ENCODE measurements at regions of chr22 and their contacts with region 1.

Region 1: DNA sequence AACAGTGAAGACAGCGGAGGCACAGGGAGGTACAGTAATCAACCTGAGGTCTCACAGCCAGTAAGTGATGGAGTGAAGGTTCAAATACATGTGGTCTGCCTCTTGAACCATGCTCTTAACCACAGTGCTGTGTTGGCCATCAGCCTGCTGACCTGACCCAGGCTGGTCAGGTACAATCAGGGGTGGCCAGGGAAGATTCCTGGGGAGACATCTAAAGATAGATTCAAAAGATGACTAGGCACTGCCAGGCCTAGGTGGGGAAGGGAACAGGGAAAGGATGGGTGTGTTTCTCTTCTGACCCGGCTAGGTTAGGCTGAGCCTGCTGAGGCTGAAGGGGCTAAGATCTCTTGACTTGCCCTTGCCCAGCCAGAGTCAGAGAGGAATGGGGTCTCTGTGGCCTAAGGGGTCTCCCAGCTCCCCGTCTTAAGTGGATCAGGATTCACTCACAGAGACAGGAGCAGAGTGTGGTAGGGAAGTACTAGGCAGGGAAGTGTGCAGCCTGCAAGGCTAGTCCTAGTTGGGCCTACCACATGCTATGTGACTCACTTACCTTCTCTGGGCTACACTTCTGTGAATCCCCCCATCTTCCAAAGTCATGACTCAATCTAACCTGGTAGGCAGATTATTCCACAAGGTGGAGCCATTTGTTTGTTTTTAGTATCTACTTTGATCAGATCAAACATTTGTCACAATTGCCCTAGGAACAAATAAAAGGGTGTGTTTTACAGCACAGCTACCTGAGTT is 10.4 kb upstream of the SREBF2 start:
- DNase-seq: peak in 14 of 35 experiments; percentile 3 to 85 (median 25)
- ATAC-seq: peak; percentile 64 to 91 (median 88)
- H3K4me3 ChIP-seq: no peak overlapping the region
- H3K4me3 Mint-ChIP-seq: no peak overlapping the region
- H3K27ac ChIP-seq: no peak overlapping the region
- H3K27ac Mint-ChIP-seq: peak overlapping the region; percentile 62 to 71
- H3K4me1 ChIP-seq: peaks cover 0 to 4% of the 10 kb centered on the region in 2 experiments
- H3K4me1 Mint-ChIP-seq: peaks cover 11 to 17% (median 14%) of the 10 kb centered on the region in 3 donors
- H3K27me3 ChIP-seq: no peaks in the 10 kb centered on the region
- H3K27me3 Mint-ChIP-seq: no peaks in the 10 kb centered on the region

Region 2: DNA sequence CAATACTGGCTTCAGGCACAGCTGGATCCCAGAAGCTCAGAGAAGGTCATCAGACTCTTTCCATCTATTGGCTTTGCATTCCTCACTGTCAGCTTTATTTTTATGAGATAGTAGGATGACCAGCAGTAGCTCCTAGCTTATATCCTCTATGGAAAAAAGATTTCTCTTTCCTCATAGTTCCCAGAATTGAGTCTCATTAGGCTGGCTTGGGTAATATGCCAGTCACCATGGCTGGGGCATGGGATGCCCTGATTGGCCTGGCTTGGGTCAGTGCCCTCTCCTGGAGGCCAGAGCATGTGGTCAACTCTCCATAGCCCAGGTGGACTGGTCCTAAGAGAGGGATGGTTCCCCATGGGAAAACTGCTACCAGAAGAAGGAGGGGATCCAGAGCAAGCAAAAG is 36.1 kb before region 1 on chr22:
- CTCF ChIA-PET with region 1: no interaction called
- POLR2A ChIA-PET with region 1: no interaction called
- DNase-seq: no peak
- ATAC-seq: no peak
- H3K4me3 ChIP-seq: no peak overlapping the region
- H3K4me3 Mint-ChIP-seq: no peak overlapping the region
- H3K27ac ChIP-seq: no peak overlapping the region
- H3K27ac Mint-ChIP-seq: peak overlapping the region; percentile 19 to 49
- H3K4me1 ChIP-seq: peaks cover 11 to 43% of the 10 kb centered on the region in 2 experiments
- H3K4me1 Mint-ChIP-seq: peaks cover 40 to 58% (median 57%) of the 10 kb centered on the region in 3 donors
- H3K27me3 ChIP-seq: no peaks in the 10 kb centered on the region
- H3K27me3 Mint-ChIP-seq: no peaks in the 10 kb centered on the region

Region 3: DNA sequence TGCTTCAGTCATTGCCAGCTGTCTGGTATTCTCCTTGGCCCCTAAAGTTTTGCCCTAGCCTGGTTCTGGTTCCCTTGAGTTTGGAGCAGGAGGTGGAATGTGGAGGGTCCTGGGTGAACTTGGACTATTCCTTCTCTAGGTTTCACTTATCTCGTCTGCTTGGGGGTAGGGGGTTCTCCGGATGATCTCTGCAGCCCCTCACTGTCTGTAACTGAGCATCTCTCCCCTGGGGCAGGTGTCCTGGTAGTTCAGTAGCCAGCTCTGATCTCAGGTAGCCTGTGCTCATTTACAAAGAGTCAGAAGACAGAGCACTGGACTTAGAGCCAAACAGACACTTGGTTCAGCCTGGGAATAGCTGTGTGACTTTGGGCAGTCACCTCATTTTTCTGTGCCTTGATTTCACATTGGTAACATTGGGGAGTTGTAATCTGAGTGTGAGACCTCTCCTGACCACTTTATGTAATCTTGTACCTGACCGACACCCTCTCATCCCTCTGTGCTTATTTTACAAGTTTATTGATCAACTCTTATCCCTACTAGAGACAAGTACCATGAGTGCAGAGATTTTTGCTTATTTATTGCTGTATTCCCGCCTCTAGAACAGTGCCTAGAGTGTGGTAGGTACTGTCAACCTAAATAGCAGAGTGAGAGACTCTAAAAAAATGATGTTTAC is 21.2 kb before region 1 on chr22:
- CTCF ChIA-PET with region 1: no interaction called
- POLR2A ChIA-PET with region 1: no interaction called
- DNase-seq: no peak
- ATAC-seq: no peak
- H3K4me3 ChIP-seq: peak overlapping the region; percentile 92 to 96
- H3K4me3 Mint-ChIP-seq: peak overlapping the region; percentile 93 to 97 (median 96)
- H3K27ac ChIP-seq: peak overlapping the region; percentile 92
- H3K27ac Mint-ChIP-seq: peak overlapping the region; percentile 98 to 99
- H3K4me1 ChIP-seq: peaks cover 13 to 38% of the 10 kb centered on the region in 2 experiments
- H3K4me1 Mint-ChIP-seq: peaks cover 38 to 53% (median 49%) of the 10 kb centered on the region in 3 donors
- H3K27me3 ChIP-seq: no peaks in the 10 kb centered on the region
- H3K27me3 Mint-ChIP-seq: no peaks in the 10 kb centered on the region

Region 4: GRCh38 chr22:41832553-41833368 is 10.3 kb after region 1 on chr22 and contains the start of gene SREBF2:
- CTCF ChIA-PET with region 1: interaction called, 3 to 8 read pairs
- POLR2A ChIA-PET with region 1: interaction called in 1 of 2 experiments, 10 read pairs
- DNase-seq: peak; percentile 94 to 100 (median 99)
- ATAC-seq: peak; percentile 93 to 94 (median 94)
- H3K4me3 ChIP-seq: peak within 1 kb of the TSS; percentile 94 to 99
- H3K4me3 Mint-ChIP-seq: peak within 1 kb of the TSS; percentile 88 to 96 (median 93)
- H3K27ac ChIP-seq: peak within 1 kb of the TSS; percentile 100
- H3K27ac Mint-ChIP-seq: peak within 1 kb of the TSS; percentile 99 to 100
- H3K4me1 ChIP-seq: peaks cover 2 to 12% of the 10 kb centered on the region in 2 experiments
- H3K4me1 Mint-ChIP-seq: peaks cover 21 to 41% (median 37%) of the 10 kb centered on the region in 3 donors
- H3K27me3 ChIP-seq: no peaks in the 10 kb centered on the region
- H3K27me3 Mint-ChIP-seq: no peaks in the 10 kb centered on the region
- total RNA-seq, gene SREBF2: 71.9 to 128 (median 112) TPM

Region 5: GRCh38 chr22:42308892-42309468 is 486.5 kb after region 1 on chr22:
- CTCF ChIA-PET with region 1: interaction called in 1 of 2 experiments, 10 read pairs
- POLR2A ChIA-PET with region 1: no interaction called
- DNase-seq: no peak
- ATAC-seq: no peak
- H3K4me3 ChIP-seq: no peak overlapping the region
- H3K4me3 Mint-ChIP-seq: no peak overlapping the region
- H3K27ac ChIP-seq: no peak overlapping the region
- H3K27ac Mint-ChIP-seq: no peak overlapping the region
- H3K4me1 ChIP-seq: peaks cover 47 to 86% of the 10 kb centered on the region in 2 experiments
- H3K4me1 Mint-ChIP-seq: peaks cover 55 to 73% (median 58%) of the 10 kb centered on the region in 3 donors
- H3K27me3 ChIP-seq: peaks cover 0 to 17% of the 10 kb centered on the region in 2 experiments
- H3K27me3 Mint-ChIP-seq: peaks cover 0 to 2% of the 10 kb centered on the region in 2 donors

Region 6: DNA sequence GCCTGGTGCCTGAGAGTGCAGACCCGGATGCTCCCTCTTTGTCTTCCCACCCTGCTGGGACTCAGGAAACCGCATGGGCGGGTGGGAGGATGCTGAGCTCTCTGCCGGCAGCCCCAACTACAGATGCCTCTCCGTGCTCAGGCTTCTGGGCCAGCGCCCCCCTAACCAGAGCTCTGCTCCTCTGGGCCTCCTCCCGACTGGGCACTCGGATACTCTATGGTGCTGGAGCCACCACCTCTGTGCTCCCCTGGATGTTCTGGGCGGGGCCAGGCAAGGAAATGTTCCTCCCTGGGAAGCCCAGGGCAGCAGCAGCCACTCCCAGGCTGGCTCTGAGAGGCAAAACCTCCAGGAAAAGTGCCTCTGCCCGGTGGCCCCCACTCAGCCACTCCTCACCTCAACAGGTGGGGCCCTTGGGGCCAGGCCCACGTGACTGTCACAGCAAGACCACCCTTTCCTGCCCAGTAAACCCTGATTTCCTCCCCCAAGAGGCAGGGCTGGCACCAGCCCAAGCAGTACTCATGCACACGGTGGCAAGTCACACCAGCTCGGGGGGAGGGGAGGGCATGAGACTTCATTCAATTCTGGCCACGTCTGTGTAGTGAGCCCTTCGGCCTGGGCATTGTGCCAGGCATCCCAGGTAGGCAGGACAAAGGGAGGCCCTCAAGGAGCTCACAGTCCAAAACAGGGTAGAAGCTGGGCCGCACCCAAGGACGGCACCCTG is 502.7 kb after region 1 on chr22:
- CTCF ChIA-PET with region 1: no interaction called
- POLR2A ChIA-PET with region 1: no interaction called
- DNase-seq: peak in 3 of 35 experiments; percentile 15 to 28 (median 17)
- ATAC-seq: peak; percentile 58 to 74 (median 70)
- H3K4me3 ChIP-seq: peak overlapping the region in 1 of 2 donors; percentile 30
- H3K4me3 Mint-ChIP-seq: peak overlapping the region in 2 of 3 donors; percentile 25 to 70
- H3K27ac ChIP-seq: no peak overlapping the region
- H3K27ac Mint-ChIP-seq: peak overlapping the region; percentile 88 to 90
- H3K4me1 ChIP-seq: peaks cover 20 to 45% of the 10 kb centered on the region in 2 experiments
- H3K4me1 Mint-ChIP-seq: peaks cover 49 to 57% (median 55%) of the 10 kb centered on the region in 3 donors
- H3K27me3 ChIP-seq: peaks cover 0 to 9% of the 10 kb centered on the region in 2 experiments
- H3K27me3 Mint-ChIP-seq: no peaks in the 10 kb centered on the region